Cardiac septum (tissue), 1 donor: ENCODE measurements at regions of chr2 and their contacts with region 1.

Region 1: DNA sequence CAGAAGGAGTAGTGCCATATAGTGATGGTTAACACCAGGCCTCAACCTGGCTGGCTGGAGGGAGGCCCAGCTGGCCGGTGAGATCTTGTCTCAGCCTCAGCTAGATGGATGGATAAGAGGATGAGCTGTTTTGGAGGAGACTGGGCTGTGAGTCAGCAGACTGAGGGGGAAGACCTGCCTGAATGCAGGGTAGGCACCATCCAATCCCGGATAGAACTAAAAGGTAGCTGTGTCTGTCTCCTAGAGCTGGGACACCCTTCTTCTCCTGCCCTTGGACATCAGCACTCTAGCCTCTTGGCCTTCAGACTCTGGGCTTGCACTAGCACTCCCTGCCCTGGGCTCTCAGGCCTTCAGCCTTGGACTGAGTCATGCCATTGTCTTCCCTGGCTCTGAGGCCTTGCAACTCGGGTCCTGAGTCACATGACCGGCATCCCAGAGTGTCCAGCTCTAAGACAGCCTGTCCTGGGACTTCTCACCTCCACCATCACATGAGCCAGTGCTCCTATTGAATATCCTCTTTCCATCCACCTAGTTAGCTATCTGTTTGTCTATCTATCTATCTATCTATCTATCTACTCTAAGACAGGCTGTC is 131.3 kb downstream of the TPO start:
- DNase-seq: no peak

Region 2: DNA sequence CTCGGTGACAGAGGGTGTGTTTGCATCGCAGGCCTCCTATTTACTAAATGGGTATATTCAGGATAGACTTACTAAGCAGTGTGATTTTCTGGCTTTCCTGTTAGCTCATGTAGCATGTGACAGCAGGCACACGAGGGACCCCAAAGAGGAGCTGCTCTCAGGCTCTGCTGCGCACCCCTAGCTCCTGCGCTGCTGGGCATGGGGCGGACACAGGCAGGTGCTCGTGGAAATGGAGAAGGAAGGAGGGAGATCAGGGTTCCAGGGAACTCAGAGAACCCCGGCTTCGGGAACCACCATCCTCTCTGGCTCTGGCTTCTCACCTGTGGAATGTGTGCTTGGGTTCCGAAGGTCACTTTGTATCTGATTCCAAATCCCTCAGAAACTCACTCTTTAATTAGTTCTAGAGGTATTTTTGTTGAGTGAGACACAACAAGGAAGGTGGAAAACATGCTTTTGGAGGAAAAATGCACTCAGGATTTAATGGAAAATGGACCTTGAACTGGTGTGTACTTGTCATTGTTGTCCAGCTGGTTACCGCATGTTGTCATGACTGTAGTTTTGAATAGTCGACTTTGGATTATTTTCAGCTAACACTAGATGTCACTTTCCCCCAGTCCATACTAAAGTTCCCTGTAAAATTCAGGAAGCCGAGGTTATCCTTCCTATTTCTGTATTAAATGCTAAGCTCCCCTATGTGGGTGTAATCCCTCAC is 590.4 kb before region 1 on chr2:
- intact Hi-C with region 1: loop called (anchors 2 kb)
- DNase-seq: no peak